ENCODE measurements at regions of chr5 and their contacts with region 1.

Region 1: DNA sequence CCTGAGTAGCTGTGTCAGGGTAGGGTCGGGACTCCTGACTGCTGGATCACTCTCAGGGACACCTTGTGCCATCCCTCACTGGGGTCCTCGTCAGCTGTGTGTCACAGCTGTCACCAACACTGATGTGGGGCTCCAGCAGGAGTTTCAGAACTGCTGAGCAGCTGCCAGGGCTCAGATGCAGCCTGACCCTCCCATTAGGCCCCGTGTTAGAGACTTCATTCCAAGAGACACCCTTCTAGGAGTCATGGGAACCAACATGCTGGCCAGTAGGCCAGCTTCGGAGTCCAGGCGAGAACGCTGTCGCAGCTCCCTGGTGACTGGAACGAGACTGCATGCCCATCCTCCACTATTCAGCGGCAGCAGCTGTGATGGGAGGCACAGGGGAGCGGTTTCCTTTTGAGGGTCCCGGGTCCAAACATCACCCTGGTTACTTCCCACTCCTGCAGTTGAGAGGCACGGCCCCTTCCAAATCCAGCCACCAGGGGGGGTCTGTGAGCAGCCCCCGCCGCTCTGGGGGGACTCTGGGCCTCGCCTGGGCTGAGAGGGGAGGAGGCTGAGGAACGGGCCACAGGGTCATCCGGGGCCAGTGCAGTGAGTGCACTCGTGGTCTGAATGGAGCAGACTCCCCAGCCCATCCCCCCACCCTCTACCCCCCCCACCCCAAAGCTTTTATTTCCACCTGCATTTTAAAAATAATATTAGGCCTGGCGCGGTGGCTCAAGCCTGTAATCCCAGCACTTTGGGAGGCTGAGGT is 12.6 kb upstream of the TCF7 start:
- DNase-seq: peak; percentile 59 to 84 (median 73)
- ATAC-seq: peak; percentile 28
- H3K4me3 ChIP-seq: no peak overlapping the region
- H3K4me3 Mint-ChIP-seq: no peak overlapping the region
- H3K27ac ChIP-seq: peak overlapping the region; percentile 56 to 97
- H3K27ac Mint-ChIP-seq: peak overlapping the region; percentile 94
- H3K4me1 ChIP-seq: peaks cover 98% of the 10 kb centered on the region
- H3K4me1 Mint-ChIP-seq: peaks cover 94% of the 10 kb centered on the region
- H3K27me3 ChIP-seq: no peaks in the 10 kb centered on the region
- H3K27me3 Mint-ChIP-seq: no peaks in the 10 kb centered on the region
- CTCF ChIP-seq: peak; percentile 92

Region 2: DNA sequence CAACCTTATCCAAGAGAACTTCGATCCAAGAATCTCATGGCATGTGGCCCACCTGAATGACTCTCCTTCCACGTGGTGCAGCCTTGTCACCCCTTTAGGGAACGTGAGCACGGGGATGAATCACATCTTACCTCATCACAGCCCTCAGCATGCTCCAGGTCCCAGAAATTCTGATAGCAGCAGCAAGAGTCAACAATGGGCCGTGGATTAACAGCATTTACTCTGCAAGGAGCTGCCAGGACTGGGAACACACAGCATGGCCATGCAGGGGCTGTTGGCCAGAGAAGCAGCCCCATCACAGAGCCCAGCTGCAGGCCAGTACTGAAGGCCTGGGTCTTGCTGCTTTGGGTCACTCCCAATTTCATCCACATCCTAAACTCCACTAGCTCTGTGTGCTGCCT is 283.8 kb before region 1 on chr5:
- CTCF ChIA-PET with region 1: no interaction called
- POLR2A ChIA-PET with region 1: no interaction called
- intact Hi-C with region 1: no loop called
- DNase-seq: no peak
- ATAC-seq: no peak
- H3K4me3 ChIP-seq: no peak overlapping the region
- H3K4me3 Mint-ChIP-seq: no peak overlapping the region
- H3K27ac ChIP-seq: no peak overlapping the region
- H3K27ac Mint-ChIP-seq: no peak overlapping the region
- H3K4me1 ChIP-seq: no peaks in the 10 kb centered on the region
- H3K4me1 Mint-ChIP-seq: peaks cover 7% of the 10 kb centered on the region
- H3K27me3 ChIP-seq: peaks cover 4 to 25% of the 10 kb centered on the region in 2 experiments
- H3K27me3 Mint-ChIP-seq: peaks cover 47% of the 10 kb centered on the region
- CTCF ChIP-seq: no peak

Region 3: DNA sequence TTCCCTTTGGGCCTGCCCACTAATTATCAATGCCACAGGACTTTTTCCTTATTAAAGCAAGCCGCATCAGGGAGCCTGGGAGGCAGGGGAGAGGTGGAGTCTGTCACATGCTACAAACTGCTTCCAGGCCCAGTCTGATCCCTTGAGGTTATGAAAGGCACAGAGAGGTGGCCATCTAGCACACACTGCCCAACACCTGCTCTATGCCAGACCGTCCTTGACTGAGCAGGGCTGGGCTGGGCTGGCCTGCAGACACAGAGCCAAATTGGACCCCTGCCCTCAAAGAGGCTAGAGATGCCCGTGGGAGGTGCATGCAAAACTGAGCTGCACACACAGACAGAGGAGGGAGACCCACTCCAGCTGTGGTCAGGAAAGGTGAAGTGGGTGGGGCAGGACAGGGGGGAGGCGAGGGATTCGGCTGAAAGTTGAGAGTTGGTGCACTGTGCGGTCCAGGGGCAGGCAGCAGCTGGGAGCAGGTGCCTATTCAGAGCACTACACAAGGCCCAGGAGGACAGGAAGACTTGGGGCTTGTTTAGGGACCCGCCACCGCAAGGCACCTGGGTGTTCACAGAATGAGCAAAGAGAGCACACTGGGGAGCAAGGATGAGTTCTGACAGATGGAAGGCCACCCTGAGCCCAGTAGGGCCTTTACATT is 23.8 kb before region 1 on chr5:
- CTCF ChIA-PET with region 1: interaction called, 15 read pairs
- POLR2A ChIA-PET with region 1: interaction called, 25 read pairs
- intact Hi-C with region 1: no loop called
- DNase-seq: peak in 5 of 14 experiments; percentile 33 to 65 (median 50)
- ATAC-seq: peak; percentile 55
- H3K4me3 ChIP-seq: no peak overlapping the region
- H3K4me3 Mint-ChIP-seq: peak overlapping the region; percentile 70
- H3K27ac ChIP-seq: peak overlapping the region in 1 of 2 donors; percentile 32
- H3K27ac Mint-ChIP-seq: peak overlapping the region; percentile 95
- H3K4me1 ChIP-seq: peaks cover 66% of the 10 kb centered on the region
- H3K4me1 Mint-ChIP-seq: peaks cover 77% of the 10 kb centered on the region
- H3K27me3 ChIP-seq: no peaks in the 10 kb centered on the region
- H3K27me3 Mint-ChIP-seq: no peaks in the 10 kb centered on the region
- CTCF ChIP-seq: no peak

Region 4: GRCh38 chr5:134119720-134120119 is 17.9 kb after region 1 on chr5:
- CTCF ChIA-PET with region 1: interaction called, 27 read pairs
- POLR2A ChIA-PET with region 1: no interaction called
- intact Hi-C with region 1: loop called in 1 of 2 experiments (anchors 2 kb)
- DNase-seq: peak in 1 of 14 experiments; percentile 58
- ATAC-seq: no peak
- H3K4me3 ChIP-seq: peak overlapping the region; percentile 92
- H3K4me3 Mint-ChIP-seq: peak overlapping the region; percentile 95
- H3K27ac ChIP-seq: peak overlapping the region; percentile 49 to 96
- H3K27ac Mint-ChIP-seq: peak overlapping the region; percentile 98
- H3K4me1 ChIP-seq: peaks cover 76% of the 10 kb centered on the region
- H3K4me1 Mint-ChIP-seq: peaks cover 66% of the 10 kb centered on the region
- H3K27me3 ChIP-seq: no peaks in the 10 kb centered on the region
- H3K27me3 Mint-ChIP-seq: no peaks in the 10 kb centered on the region
- CTCF ChIP-seq: no peak

Region 5: DNA sequence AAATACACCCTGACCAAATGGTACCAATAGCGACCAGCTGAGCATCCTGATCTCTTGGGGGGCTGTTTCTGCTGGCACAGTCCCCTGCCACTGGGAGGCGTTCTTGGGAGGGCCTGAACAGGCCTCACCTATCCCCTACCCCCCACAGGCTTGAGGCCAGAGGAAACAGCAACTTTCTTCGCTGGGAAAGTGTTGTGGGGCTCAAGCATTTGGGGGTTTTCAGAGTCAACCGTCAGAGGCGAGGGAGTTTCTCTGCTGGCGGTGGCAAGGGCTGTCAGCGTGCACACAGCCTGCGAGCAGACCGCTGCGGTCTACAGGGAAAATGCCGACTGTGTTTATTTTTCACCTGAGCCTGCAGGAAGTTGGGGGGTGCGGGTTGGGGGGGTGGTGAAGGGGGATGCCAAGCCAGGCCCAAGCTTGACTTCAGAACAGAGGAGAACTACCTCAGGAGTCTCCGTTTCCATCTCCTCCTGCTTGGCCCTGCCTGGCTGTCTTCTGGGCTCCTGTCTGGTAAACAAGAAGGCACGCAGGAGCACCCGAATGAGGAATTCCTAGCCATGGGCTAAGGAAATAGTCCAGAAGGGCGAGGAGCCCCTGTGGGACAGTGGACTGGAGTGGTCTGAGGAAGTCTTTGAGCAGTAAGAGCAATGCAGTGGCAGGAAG is 30.6 kb after region 1 on chr5:
- CTCF ChIA-PET with region 1: interaction called, 77 read pairs
- POLR2A ChIA-PET with region 1: no interaction called
- intact Hi-C with region 1: loop called in 1 of 2 experiments (anchors 2 kb)
- DNase-seq: peak; percentile 68 to 97 (median 78)
- ATAC-seq: peak; percentile 74
- H3K4me3 ChIP-seq: peak overlapping the region; percentile 92
- H3K4me3 Mint-ChIP-seq: peak overlapping the region; percentile 95
- H3K27ac ChIP-seq: peak overlapping the region; percentile 83 to 96
- H3K27ac Mint-ChIP-seq: peak overlapping the region; percentile 98
- H3K4me1 ChIP-seq: peaks cover 100% of the 10 kb centered on the region
- H3K4me1 Mint-ChIP-seq: peaks cover 100% of the 10 kb centered on the region
- H3K27me3 ChIP-seq: no peaks in the 10 kb centered on the region
- H3K27me3 Mint-ChIP-seq: no peaks in the 10 kb centered on the region
- CTCF ChIP-seq: peak; percentile 30

Region 6: DNA sequence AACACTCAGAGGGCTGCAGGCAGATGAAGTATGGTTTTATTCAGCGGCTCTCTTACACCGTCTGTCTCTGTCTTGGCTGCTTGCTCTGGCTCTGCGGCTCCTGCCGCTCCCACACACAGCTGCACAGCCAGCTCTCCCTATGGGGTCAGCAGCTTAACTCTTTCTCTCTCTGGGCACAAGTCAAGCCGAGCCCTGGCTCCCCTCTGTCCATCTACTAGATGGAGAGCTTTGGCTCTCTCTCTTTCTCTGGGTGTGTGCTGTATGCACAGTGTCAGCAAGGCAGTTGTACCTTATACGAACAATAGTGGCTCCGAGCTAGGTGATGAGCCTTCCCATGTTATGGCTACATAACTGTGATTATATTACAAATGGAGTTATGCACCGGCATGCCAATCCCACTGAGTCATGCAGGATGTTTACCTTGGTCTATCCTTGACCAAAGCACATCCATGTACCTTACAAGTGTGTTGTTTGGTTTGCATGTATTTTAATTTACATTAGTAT is 143.3 kb after region 1 on chr5:
- CTCF ChIA-PET with region 1: no interaction called
- POLR2A ChIA-PET with region 1: no interaction called
- intact Hi-C with region 1: no loop called
- DNase-seq: no peak
- ATAC-seq: no peak
- H3K4me3 ChIP-seq: no peak overlapping the region
- H3K4me3 Mint-ChIP-seq: no peak overlapping the region
- H3K27ac ChIP-seq: no peak overlapping the region
- H3K27ac Mint-ChIP-seq: no peak overlapping the region
- H3K4me1 ChIP-seq: no peaks in the 10 kb centered on the region
- H3K4me1 Mint-ChIP-seq: no peaks in the 10 kb centered on the region
- H3K27me3 ChIP-seq: no peaks in the 10 kb centered on the region
- H3K27me3 Mint-ChIP-seq: peaks cover 4% of the 10 kb centered on the region
- CTCF ChIP-seq: no peak